B cell (primary cell): ENCODE measurements at regions of chr6 and their contacts with region 1.

Region 1: DNA sequence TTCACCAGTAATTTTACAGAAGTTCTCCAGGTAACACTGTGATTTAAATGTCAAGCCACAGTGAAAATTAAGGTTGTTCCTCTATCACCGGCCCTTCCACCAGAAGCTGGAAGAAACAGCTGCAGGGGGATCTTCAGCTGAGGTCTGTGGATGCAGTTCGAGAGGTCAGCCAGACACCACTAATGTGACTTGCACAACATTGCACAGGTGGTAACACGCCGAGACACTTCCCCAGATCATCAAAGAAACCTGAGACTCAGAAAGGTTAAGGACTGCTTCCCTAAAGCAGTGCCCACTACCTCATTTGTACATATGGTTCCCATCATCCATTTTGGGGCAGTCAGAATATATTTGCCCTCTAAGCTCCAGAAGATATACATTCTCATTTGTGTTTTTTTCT is 8.1 kb upstream of the SERPINB9 start:
- DNase-seq: peak; percentile 78
- ATAC-seq: peak; percentile 83
- H3K4me3 ChIP-seq: no peak overlapping the region
- H3K4me3 Mint-ChIP-seq: peak overlapping the region; percentile 64
- H3K27ac ChIP-seq: peak overlapping the region; percentile 54 to 62
- H3K27ac Mint-ChIP-seq: peak overlapping the region; percentile 85
- H3K4me1 ChIP-seq: peaks cover 24 to 27% of the 10 kb centered on the region in 2 donors
- H3K4me1 Mint-ChIP-seq: peaks cover 36% of the 10 kb centered on the region
- H3K27me3 ChIP-seq: no peaks in the 10 kb centered on the region
- H3K27me3 Mint-ChIP-seq: no peaks in the 10 kb centered on the region
- CTCF ChIP-seq: no peak

Region 2: DNA sequence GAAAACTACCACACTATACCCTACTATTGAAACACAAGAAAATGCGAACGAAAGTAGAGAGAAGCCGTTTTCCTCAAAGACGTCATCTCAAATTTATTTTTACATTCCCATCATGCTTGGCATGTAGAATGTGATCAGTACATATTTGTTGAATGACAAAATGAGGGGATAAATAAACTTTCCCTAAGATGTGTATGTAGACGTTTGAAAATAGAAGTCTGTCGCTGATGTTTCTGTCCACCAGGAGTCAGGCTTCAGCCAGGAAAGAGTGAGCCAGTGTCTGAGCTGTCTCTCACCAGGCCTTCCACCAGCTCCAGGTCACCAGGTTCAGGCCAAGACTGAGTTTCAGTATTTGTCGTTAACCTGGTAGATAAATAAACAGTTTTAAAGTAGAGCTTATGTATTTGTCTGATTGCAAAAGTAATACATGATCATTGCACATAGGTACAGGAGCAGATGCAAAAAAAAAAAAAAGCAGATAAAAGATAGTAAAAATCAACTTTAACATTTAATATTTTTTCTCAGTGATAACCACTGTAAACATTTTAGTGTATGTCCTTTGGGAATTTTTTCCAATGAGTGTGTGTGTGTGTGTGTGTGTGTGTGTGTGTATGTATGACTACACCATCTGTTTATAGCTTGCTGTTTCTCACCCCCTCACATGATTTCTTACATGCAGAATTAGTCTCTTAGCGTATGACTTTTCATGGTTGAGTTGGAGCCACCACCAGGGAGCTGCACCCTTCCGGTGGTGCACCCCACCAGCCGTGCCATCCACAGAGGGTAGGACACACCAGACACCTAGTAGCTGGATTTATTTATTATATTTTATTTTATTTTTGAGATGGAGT is 119.8 kb before region 1 on chr6:
- CTCF ChIA-PET with region 1: interaction called, 32 read pairs
- POLR2A ChIA-PET with region 1: interaction called, 3 read pairs
- intact Hi-C with region 1: loop called (anchors 1 kb)
- DNase-seq: peak; percentile 78
- ATAC-seq: peak; percentile 83
- H3K4me3 ChIP-seq: no peak overlapping the region
- H3K4me3 Mint-ChIP-seq: peak overlapping the region; percentile 67
- H3K27ac ChIP-seq: peak overlapping the region in 1 of 2 donors; percentile 18
- H3K27ac Mint-ChIP-seq: peak overlapping the region; percentile 82
- H3K4me1 ChIP-seq: peaks cover 30 to 35% of the 10 kb centered on the region in 2 donors
- H3K4me1 Mint-ChIP-seq: peaks cover 36% of the 10 kb centered on the region
- H3K27me3 ChIP-seq: no peaks in the 10 kb centered on the region
- H3K27me3 Mint-ChIP-seq: no peaks in the 10 kb centered on the region
- CTCF ChIP-seq: peak; percentile 82

Region 3: GRCh38 chr6:2853761-2854395 is 57.3 kb before region 1 on chr6:
- CTCF ChIA-PET with region 1: interaction called, 165 read pairs
- POLR2A ChIA-PET with region 1: interaction called, 5 read pairs
- intact Hi-C with region 1: no loop called
- DNase-seq: peak; percentile 85
- ATAC-seq: peak; percentile 39
- H3K4me3 ChIP-seq: peak overlapping the region in 3 of 5 experiments; percentile 31 to 52 (median 31)
- H3K4me3 Mint-ChIP-seq: peak overlapping the region; percentile 74
- H3K27ac ChIP-seq: peak overlapping the region; percentile 73 to 84
- H3K27ac Mint-ChIP-seq: peak overlapping the region; percentile 98
- H3K4me1 ChIP-seq: peaks cover 54 to 62% of the 10 kb centered on the region in 2 donors
- H3K4me1 Mint-ChIP-seq: peaks cover 68% of the 10 kb centered on the region
- H3K27me3 ChIP-seq: no peaks in the 10 kb centered on the region
- H3K27me3 Mint-ChIP-seq: no peaks in the 10 kb centered on the region
- CTCF ChIP-seq: peak; percentile 69

Region 4: DNA sequence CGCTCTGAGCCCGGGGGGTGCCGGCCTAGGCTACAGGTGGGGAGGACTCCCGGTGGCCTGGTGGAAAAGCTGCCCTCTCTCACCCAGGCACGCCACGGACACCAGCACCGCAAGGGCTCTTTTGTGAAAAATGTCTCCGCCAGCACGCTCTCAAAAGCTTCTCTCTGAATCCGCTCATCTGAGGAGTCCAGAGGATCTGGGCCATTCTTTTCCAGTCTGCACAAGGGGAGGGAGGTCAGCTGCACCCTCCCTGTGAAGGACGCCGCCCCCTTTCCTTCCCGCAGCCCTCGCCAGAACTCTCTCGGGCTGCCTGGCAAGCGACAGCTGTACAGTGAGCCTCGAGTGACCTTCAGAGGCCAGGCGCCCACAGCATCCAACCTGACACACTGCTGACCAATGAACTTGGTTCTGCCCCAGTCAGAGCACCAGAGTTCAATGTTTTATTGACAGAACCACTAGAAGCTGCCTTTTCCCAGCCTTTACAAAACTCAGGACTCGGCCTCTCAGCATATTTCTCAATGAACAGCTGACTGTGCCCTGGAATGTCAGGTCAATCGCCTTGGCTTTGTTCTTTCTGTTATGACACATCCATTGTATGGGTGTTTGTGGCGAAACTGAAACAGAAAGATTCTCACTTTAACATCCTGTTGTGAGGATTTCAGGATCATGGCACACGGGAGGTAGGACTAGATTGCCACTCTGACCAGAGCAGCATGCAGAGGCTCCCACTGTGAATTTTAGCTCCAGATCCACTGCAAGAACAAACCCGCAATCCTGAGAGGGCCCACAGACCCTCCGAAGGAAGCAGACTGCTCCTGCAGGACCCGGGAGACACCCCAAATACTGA is 34.7 kb before region 1 on chr6:
- CTCF ChIA-PET with region 1: interaction called, 10 read pairs
- POLR2A ChIA-PET with region 1: no interaction called
- intact Hi-C with region 1: loop called (anchors 1 kb)
- DNase-seq: peak; percentile 58
- ATAC-seq: peak; percentile 15
- H3K4me3 ChIP-seq: peak overlapping the region; percentile 44 to 64 (median 58)
- H3K4me3 Mint-ChIP-seq: peak overlapping the region; percentile 91
- H3K27ac ChIP-seq: peak overlapping the region; percentile 91 to 94
- H3K27ac Mint-ChIP-seq: peak overlapping the region; percentile 97
- H3K4me1 ChIP-seq: peaks cover 73 to 75% of the 10 kb centered on the region in 2 donors
- H3K4me1 Mint-ChIP-seq: peaks cover 85% of the 10 kb centered on the region
- H3K27me3 ChIP-seq: no peaks in the 10 kb centered on the region
- H3K27me3 Mint-ChIP-seq: no peaks in the 10 kb centered on the region
- CTCF ChIP-seq: no peak

Region 5: GRCh38 chr6:2900821-2901644 is 10.1 kb before region 1 on chr6:
- CTCF ChIA-PET with region 1: interaction called, 20 read pairs
- POLR2A ChIA-PET with region 1: interaction called, 7 read pairs
- intact Hi-C with region 1: loop called (anchors 1 kb)
- DNase-seq: no peak
- ATAC-seq: no peak
- H3K4me3 ChIP-seq: peak overlapping the region in 4 of 5 experiments; percentile 10 to 95 (median 90)
- H3K4me3 Mint-ChIP-seq: peak overlapping the region; percentile 100
- H3K27ac ChIP-seq: peak overlapping the region; percentile 31 to 91
- H3K27ac Mint-ChIP-seq: peak overlapping the region; percentile 97
- H3K4me1 ChIP-seq: peaks cover 45 to 48% of the 10 kb centered on the region in 2 donors
- H3K4me1 Mint-ChIP-seq: peaks cover 56% of the 10 kb centered on the region
- H3K27me3 ChIP-seq: no peaks in the 10 kb centered on the region
- H3K27me3 Mint-ChIP-seq: no peaks in the 10 kb centered on the region
- CTCF ChIP-seq: no peak

Region 6: DNA sequence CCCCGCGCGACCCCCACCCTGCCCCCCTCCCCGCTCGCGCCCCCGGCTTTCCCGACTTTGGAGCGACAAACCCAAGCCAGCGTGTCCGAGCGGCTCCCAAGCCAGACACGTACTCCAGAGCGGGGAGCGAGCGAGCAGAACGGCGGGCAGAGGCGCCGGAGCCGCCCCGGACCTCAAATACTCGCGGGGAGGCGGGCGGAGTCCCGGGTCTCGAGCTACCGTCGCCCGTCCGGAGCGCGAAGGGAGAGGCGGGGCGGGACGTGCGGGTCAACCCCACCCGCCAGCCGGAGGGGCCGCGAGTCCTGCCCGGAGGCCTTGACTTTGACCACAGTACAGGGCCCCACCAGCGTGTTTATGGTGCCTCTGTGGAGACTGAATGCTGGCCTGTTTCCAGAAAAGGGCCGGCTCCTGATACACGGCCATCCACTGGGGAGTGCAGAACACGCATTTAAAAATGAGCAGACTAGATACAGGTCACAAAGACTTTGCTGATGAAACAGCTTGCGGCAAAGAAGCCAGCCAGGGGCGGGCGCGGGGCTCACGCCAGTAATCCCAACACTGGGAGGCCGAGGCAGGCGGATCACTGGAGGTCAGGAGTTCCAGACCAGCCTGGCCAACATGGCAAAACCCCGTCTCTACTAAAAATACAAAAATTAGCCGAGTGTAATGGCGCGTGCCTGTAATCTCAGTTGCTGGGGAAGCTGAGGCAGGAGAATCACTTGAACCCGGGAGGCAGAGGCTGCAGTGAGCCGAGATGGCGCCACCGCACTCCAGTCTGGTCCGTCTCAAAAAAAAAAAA is 60.4 kb after region 1 on chr6 and contains the start of gene SERPINB6:
- CTCF ChIA-PET with region 1: no interaction called
- POLR2A ChIA-PET with region 1: no interaction called
- intact Hi-C with region 1: no loop called
- DNase-seq: peak; percentile 65
- ATAC-seq: peak; percentile 64
- H3K4me3 ChIP-seq: peak within 1 kb of the TSS; percentile 56 to 86 (median 68)
- H3K4me3 Mint-ChIP-seq: peak within 1 kb of the TSS; percentile 91
- H3K27ac ChIP-seq: peak within 1 kb of the TSS; percentile 39 to 74
- H3K27ac Mint-ChIP-seq: peak within 1 kb of the TSS; percentile 93
- H3K4me1 ChIP-seq: peaks cover 13 to 17% of the 10 kb centered on the region in 2 donors
- H3K4me1 Mint-ChIP-seq: peaks cover 43% of the 10 kb centered on the region
- H3K27me3 ChIP-seq: peaks cover 0 to 4% (median 0%) of the 10 kb centered on the region in 4 experiments
- H3K27me3 Mint-ChIP-seq: peaks cover 3% of the 10 kb centered on the region
- CTCF ChIP-seq: no peak
- total RNA-seq, gene SERPINB6: 58.5 and 58.9 TPM in 2 replicates